Esophagus muscularis mucosa (tissue), 4 donors: ENCODE measurements at regions of chr22 and their contacts with region 1.

Region 1: GRCh38 chr22:27107824-27108223 is 450.4 kb downstream of the MIAT start:
- DNase-seq: no peak
- H3K4me3 ChIP-seq: no peak overlapping the region
- H3K27ac ChIP-seq: peak overlapping the region; percentile 75 to 86 (median 83)
- H3K4me1 ChIP-seq: peaks cover 39 to 81% (median 71%) of the 10 kb centered on the region in 4 donors
- H3K27me3 ChIP-seq: no peaks in the 10 kb centered on the region
- CTCF ChIP-seq: no peak
- EP300 ChIP-seq: no peak
- POLR2A ChIP-seq: no peak

Region 2: GRCh38 chr22:27203276-27203660 is 95.4 kb after region 1 on chr22:
- intact Hi-C with region 1: loop called (anchors 5 kb)
- DNase-seq: no peak
- H3K4me3 ChIP-seq: peak overlapping the region in 1 of 4 donors; percentile 36
- H3K27ac ChIP-seq: peak overlapping the region; percentile 78 to 83 (median 79)
- H3K4me1 ChIP-seq: peaks cover 3 to 44% (median 42%) of the 10 kb centered on the region in 4 donors
- H3K27me3 ChIP-seq: no peaks in the 10 kb centered on the region
- CTCF ChIP-seq: no peak
- EP300 ChIP-seq: no peak
- POLR2A ChIP-seq: no peak

Region 3: DNA sequence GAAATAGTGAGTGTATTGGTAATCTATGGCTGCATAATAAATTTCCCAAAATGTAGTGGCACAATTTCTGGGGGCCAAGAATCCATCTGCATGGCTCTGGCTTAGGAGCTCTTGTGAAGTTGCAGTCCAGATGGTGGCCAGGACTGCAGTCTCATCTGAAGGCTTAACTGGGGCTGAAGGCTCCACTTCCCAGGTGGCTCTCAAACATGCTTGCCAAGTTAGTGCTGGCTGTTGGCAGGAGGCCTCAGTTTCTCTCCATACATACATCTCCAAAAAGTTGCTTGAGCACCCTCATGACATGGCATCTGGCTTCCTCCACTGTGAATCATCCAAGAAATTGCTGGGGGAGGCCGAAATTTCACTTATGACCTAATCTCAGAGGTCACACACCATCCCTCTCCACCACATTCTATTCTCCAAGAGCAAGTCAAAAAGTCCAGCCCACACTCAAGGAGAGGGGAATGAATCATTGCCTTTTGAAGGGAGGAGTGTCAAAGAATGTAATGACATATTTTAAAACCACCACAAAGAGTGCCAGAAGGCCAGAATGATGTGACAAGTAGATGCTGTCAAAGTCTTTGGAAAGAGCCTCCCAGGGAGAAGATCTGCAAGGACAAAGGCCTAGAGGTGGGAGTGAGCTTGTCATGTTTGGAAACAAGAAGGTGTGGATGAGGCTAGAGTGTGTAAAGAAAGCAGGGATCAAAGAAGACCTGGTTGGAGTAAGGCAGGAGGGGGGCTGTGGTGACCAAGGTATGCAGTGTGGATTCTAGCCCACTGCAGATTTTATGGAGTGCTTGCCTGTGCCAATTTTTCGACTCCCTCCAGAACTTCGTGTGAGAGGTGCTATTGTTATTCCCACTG is 115.7 kb after region 1 on chr22:
- intact Hi-C with region 1: no loop called
- DNase-seq: no peak
- H3K4me3 ChIP-seq: no peak overlapping the region
- H3K27ac ChIP-seq: peak overlapping the region; percentile 46 to 79 (median 54)
- H3K4me1 ChIP-seq: peaks cover 0 to 40% (median 33%) of the 10 kb centered on the region in 4 donors
- H3K27me3 ChIP-seq: no peaks in the 10 kb centered on the region
- CTCF ChIP-seq: no peak
- EP300 ChIP-seq: no peak
- POLR2A ChIP-seq: no peak